Activated CD4-positive, alpha-beta T cell treated with anti-CD3 and anti-CD28 coated beads for 36 hours (primary cell): ENCODE measurements at regions of chr22 and their contacts with region 1.

Region 1: DNA sequence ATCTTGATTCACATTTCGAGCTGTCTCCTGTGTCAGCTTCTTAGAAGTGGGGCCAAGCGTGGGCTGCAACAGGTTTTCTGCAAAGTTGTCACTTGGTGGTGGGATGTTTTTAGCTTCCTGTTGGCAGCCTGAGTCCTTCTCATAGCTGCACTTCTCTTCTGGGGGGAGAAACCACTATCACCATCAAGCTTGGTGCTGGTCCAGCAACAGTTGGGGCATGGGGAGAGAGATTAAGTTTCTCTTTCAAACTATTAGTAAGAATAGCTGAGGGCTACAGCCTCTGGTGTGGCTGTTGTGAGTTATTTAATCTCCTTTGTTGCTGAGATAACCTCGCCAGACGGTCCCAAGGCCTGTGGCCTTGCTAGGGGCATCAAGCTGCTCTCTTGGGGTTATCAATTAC is 123.3 kb upstream of the CRYBB3 start:
- DNase-seq: peak; percentile 85
- ATAC-seq: peak; percentile 76
- H3K4me3 Mint-ChIP-seq: peak overlapping the region; percentile 34
- H3K27ac Mint-ChIP-seq: peak overlapping the region; percentile 83
- H3K4me1 Mint-ChIP-seq: peaks cover 86% of the 10 kb centered on the region
- H3K27me3 Mint-ChIP-seq: no peaks in the 10 kb centered on the region

Region 2: GRCh38 chr22:25062386-25063085 is 13.8 kb before region 1 on chr22:
- CTCF ChIA-PET with region 1: interaction called, 46 read pairs
- POLR2A ChIA-PET with region 1: interaction called, 6 read pairs
- intact Hi-C with region 1: loop called (anchors 1 to 2 kb)
- DNase-seq: peak; percentile 73
- ATAC-seq: peak; percentile 45
- H3K4me3 Mint-ChIP-seq: peak overlapping the region; percentile 56
- H3K27ac Mint-ChIP-seq: peak overlapping the region; percentile 83
- H3K4me1 Mint-ChIP-seq: peaks cover 77% of the 10 kb centered on the region
- H3K27me3 Mint-ChIP-seq: no peaks in the 10 kb centered on the region

Region 3: GRCh38 chr22:25120093-25120561 is 43.8 kb after region 1 on chr22:
- CTCF ChIA-PET with region 1: no interaction called
- POLR2A ChIA-PET with region 1: no interaction called
- intact Hi-C with region 1: no loop called
- DNase-seq: no peak
- ATAC-seq: no peak
- H3K4me3 Mint-ChIP-seq: no peak overlapping the region
- H3K27ac Mint-ChIP-seq: no peak overlapping the region
- H3K4me1 Mint-ChIP-seq: no peaks in the 10 kb centered on the region
- H3K27me3 Mint-ChIP-seq: no peaks in the 10 kb centered on the region